GM18951 (cell line): ENCODE measurements at regions of chr4 and their contacts with region 1.

Region 1: DNA sequence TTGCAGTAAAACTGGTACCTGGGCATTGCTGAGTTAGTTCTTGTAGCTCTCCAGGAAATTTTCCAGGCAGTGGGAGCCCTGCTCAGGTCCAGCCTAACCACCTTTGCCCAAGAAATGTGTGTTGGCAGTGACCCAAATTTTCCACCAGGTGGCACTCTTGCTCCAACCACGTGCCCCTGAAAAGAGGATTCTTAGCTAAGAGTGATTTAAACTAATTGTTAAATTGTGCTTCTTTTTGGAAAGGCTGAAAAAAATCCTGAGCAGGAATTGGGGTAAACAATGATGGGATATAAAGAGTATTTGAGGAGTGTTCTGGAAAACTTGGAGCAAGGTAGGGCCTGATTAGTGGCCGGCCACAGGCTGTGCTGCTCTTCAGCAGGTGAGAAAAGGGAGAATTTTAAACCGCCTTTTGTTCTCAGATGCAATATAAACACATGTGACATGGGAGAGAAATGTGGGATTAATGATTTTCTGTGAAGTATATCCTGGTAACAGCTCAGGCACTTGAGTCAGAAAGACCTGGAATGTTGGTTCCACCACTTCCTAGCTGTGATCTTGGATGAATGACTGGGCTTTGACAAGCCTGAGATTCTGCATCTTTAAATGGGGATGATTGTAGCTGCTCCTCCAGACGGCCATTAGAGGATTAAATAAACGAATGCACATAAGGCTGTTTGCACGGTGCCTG is 219.6 kb downstream of the PTTG2 start:
- POLR2A ChIP-seq: no peak

Region 2: GRCh38 chr4:38675146-38676121 is 495.6 kb after region 1 on chr4:
- in situ Hi-C with region 1: loop called (anchors 10 kb)
- POLR2A ChIP-seq: no peak

Region 3: GRCh38 chr4:38730830-38731646 is 551.2 kb after region 1 on chr4:
- in situ Hi-C with region 1: loop called (anchors 10 kb)
- POLR2A ChIP-seq: no peak

Region 4: GRCh38 chr4:38867478-38868058 is 687.7 kb after region 1 on chr4 and contains the start of gene FAM114A1:
- in situ Hi-C with region 1: loop called (anchors 25 kb)
- POLR2A ChIP-seq: peak; percentile 51